ENCODE measurements at regions of chr3 and their contacts with region 1.

Region 1: DNA sequence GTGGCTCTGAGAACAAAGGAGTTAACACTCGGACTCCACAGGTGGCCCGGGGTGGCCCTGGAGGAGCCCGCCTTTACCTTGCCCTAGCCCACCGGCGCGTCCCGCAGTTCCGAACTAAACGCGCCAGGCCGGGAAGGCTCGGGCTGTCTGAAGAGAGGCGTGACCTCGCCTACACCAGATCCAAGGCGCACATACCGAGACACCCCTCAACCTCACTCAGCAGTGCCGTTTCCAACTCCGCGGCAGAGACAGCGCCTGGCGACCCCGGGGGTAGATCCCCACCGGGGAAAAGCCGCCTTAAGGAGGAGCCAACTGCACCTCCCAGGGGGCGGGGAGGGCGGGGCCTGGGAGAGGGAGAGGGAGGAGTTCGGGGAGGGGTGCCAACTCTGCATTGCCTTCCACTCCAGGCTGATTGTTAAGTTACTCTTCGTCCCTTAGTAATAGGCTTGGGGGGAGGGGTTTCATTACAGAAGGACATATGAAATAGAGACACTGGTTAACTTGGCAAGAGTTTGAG is at the start of gene DLG1:
- DNase-seq: peak; percentile 85 to 95
- H3K4me3 ChIP-seq: peak within 1 kb of the TSS; percentile 88
- H3K4me3 Mint-ChIP-seq: peak within 1 kb of the TSS; percentile 73
- H3K27ac Mint-ChIP-seq: peak within 1 kb of the TSS; percentile 95
- H3K4me1 ChIP-seq: peaks cover 29% of the 10 kb centered on the region
- H3K4me1 Mint-ChIP-seq: peaks cover 23% of the 10 kb centered on the region
- H3K27me3 ChIP-seq: no peaks in the 10 kb centered on the region
- H3K27me3 Mint-ChIP-seq: no peaks in the 10 kb centered on the region
- CTCF ChIP-seq: no peak
- total RNA-seq, gene DLG1: 167 and 170 TPM in 2 replicates

Region 2: DNA sequence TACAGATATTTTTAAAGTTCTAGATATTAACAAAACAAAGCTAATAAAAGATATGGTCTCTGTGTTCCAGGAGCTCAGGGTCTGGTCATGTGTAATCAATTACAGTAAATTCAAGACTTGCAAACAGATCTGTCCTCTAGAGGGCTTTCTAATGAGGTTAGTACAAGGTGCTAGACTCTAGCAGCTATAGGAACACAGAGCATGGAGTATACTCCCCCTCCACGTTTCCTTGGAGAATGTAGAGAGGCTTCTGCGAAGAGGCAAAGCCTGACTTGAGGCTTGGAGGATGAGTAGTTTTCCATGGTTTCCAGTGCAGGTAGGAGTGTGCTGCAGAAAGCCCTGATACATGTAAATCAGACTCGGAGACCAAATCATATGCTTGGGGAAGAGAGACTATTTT is 32.7 kb after region 1 on chr3:
- CTCF ChIA-PET with region 1: no interaction called
- POLR2A ChIA-PET with region 1: interaction called, 4 read pairs
- intact Hi-C with region 1: loop called (anchors 1 kb)
- DNase-seq: no peak
- H3K4me3 ChIP-seq: no peak overlapping the region
- H3K4me3 Mint-ChIP-seq: no peak overlapping the region
- H3K27ac Mint-ChIP-seq: peak overlapping the region; percentile 5
- H3K4me1 ChIP-seq: peaks cover 23% of the 10 kb centered on the region
- H3K4me1 Mint-ChIP-seq: peaks cover 27% of the 10 kb centered on the region
- H3K27me3 ChIP-seq: no peaks in the 10 kb centered on the region
- H3K27me3 Mint-ChIP-seq: no peaks in the 10 kb centered on the region
- CTCF ChIP-seq: peak in 1 of 2 experiments; percentile 36

Region 3: DNA sequence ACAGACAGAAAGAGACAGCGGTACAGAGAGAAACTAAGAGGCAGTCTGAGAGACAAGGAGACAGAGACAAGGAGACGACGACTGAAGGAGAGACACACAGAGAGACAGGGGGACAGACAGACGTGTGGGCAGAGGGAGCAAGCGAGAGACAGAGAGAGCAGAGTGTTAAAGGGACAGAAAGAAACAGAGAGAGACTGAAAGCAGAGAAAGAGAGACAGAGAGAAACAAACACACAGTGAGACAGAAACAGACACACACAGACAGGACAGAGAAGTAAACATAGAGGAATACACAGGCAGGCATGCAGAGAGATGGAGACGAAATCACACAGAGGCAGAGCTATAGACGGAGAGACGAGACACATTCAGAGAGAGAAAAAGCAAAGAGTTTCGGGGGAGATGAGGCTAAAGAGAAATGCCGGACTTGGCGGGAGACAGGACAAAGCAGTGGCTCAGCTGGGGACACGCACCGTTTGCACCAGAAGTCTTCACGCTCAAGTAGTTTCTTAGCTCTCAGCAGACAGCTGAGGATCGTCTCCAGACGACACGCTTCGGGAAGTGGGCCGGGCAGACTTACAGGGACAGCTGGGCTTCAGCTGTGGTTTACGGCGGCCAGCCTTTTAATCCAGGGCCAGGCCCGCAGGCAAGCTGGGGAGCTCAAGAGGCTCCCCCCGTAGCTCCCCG is 56.1 kb after region 1 on chr3:
- CTCF ChIA-PET with region 1: no interaction called
- POLR2A ChIA-PET with region 1: interaction called, 14 read pairs
- intact Hi-C with region 1: loop called (anchors 1 kb)
- DNase-seq: no peak
- H3K4me3 ChIP-seq: no peak overlapping the region
- H3K4me3 Mint-ChIP-seq: peak overlapping the region; percentile 60
- H3K27ac Mint-ChIP-seq: peak overlapping the region; percentile 90
- H3K4me1 ChIP-seq: peaks cover 50% of the 10 kb centered on the region
- H3K4me1 Mint-ChIP-seq: peaks cover 29% of the 10 kb centered on the region
- H3K27me3 ChIP-seq: no peaks in the 10 kb centered on the region
- H3K27me3 Mint-ChIP-seq: no peaks in the 10 kb centered on the region
- CTCF ChIP-seq: no peak

Region 4: GRCh38 chr3:197364410-197365071 is 66.1 kb after region 1 on chr3:
- CTCF ChIA-PET with region 1: no interaction called
- POLR2A ChIA-PET with region 1: interaction called, 15 read pairs
- intact Hi-C with region 1: no loop called
- DNase-seq: peak in 1 of 2 experiments; percentile 24
- H3K4me3 ChIP-seq: no peak overlapping the region
- H3K4me3 Mint-ChIP-seq: no peak overlapping the region
- H3K27ac Mint-ChIP-seq: peak overlapping the region; percentile 70
- H3K4me1 ChIP-seq: peaks cover 54% of the 10 kb centered on the region
- H3K4me1 Mint-ChIP-seq: peaks cover 60% of the 10 kb centered on the region
- H3K27me3 ChIP-seq: no peaks in the 10 kb centered on the region
- H3K27me3 Mint-ChIP-seq: no peaks in the 10 kb centered on the region
- CTCF ChIP-seq: no peak

Region 5: DNA sequence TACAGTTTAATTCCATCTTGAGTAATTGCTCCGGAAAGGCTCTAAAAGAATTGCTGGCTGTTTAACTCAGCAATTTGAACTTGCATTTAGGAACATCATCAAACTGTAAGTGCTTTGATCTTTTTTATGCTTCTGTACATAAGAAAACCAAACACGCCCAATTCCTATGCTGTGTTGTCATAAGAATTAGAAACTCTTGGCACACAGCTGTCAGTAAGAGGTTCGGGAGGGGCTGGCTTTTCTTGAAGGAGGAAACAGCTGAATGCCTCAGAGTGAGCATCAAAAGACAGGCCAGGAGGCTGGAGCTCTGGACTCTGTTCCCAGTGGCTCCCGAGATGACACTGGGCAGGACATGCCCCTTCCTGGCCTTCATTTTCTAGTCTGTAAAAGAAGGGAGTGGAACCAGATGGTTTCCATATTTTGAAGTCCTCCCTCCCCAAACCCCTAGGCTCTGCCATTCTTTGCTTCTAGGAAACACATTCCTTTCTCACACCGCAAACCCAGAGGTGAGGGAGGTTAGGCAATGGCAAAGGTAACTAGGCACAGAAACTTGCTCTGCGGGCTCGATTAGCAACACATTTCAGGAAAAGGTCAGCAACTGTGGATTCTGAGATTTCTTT is 73.8 kb after region 1 on chr3:
- CTCF ChIA-PET with region 1: no interaction called
- POLR2A ChIA-PET with region 1: interaction called, 3 read pairs
- intact Hi-C with region 1: loop called (anchors 1 kb)
- DNase-seq: peak; percentile 90 to 93
- H3K4me3 ChIP-seq: no peak overlapping the region
- H3K4me3 Mint-ChIP-seq: peak overlapping the region; percentile 7
- H3K27ac Mint-ChIP-seq: peak overlapping the region; percentile 90
- H3K4me1 ChIP-seq: peaks cover 57% of the 10 kb centered on the region
- H3K4me1 Mint-ChIP-seq: peaks cover 32% of the 10 kb centered on the region
- H3K27me3 ChIP-seq: no peaks in the 10 kb centered on the region
- H3K27me3 Mint-ChIP-seq: no peaks in the 10 kb centered on the region
- CTCF ChIP-seq: no peak

Region 6: GRCh38 chr3:197432384-197433127 is 134.2 kb after region 1 on chr3:
- CTCF ChIA-PET with region 1: no interaction called
- POLR2A ChIA-PET with region 1: interaction called, 11 read pairs
- intact Hi-C with region 1: no loop called
- DNase-seq: no peak
- H3K4me3 ChIP-seq: no peak overlapping the region
- H3K4me3 Mint-ChIP-seq: no peak overlapping the region
- H3K27ac Mint-ChIP-seq: no peak overlapping the region
- H3K4me1 ChIP-seq: peaks cover 21% of the 10 kb centered on the region
- H3K4me1 Mint-ChIP-seq: peaks cover 33% of the 10 kb centered on the region
- H3K27me3 ChIP-seq: no peaks in the 10 kb centered on the region
- H3K27me3 Mint-ChIP-seq: no peaks in the 10 kb centered on the region
- CTCF ChIP-seq: no peak

Region 7: GRCh38 chr3:197501879-197502620 is 203.7 kb after region 1 on chr3:
- CTCF ChIA-PET with region 1: no interaction called
- POLR2A ChIA-PET with region 1: no interaction called
- intact Hi-C with region 1: loop called (anchors 5 kb)
- DNase-seq: peak in 1 of 2 experiments; percentile 37
- H3K4me3 ChIP-seq: no peak overlapping the region
- H3K4me3 Mint-ChIP-seq: no peak overlapping the region
- H3K27ac Mint-ChIP-seq: peak overlapping the region; percentile 74
- H3K4me1 ChIP-seq: peaks cover 29% of the 10 kb centered on the region
- H3K4me1 Mint-ChIP-seq: peaks cover 17% of the 10 kb centered on the region
- H3K27me3 ChIP-seq: no peaks in the 10 kb centered on the region
- H3K27me3 Mint-ChIP-seq: no peaks in the 10 kb centered on the region
- CTCF ChIP-seq: peak; percentile 29 to 35